ENCODE measurements at regions of chr1 and their contacts with region 1.

Region 1: DNA sequence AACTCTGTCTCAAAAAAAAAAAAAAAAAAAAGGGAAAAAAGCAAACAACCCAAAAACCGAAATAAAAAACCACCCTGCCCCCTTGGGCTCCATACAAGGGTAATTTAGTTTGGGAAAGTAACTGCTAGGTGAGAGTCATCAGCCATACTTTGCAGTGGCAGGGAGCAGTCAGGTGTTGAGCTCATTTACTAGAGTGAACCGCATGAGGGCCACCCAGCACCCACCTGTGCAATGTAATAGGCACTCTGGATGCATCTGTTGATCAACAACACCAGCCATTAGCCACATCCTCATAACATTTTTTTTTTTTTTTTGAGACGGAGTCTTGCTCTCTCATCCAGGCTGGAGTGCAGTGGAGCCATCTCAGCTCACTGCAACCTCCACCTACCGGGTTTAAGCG is 9.1 kb downstream of the INAVA start:
- DNase-seq: peak in 1 of 35 experiments; percentile 34
- ATAC-seq: no peak
- H3K4me3 ChIP-seq: no peak overlapping the region
- H3K4me3 Mint-ChIP-seq: no peak overlapping the region
- H3K27ac ChIP-seq: no peak overlapping the region
- H3K27ac Mint-ChIP-seq: no peak overlapping the region
- H3K4me1 ChIP-seq: peaks cover 3 to 30% of the 10 kb centered on the region in 2 experiments
- H3K4me1 Mint-ChIP-seq: peaks cover 19 to 32% (median 23%) of the 10 kb centered on the region in 3 donors
- H3K27me3 ChIP-seq: peaks cover 0 to 47% of the 10 kb centered on the region in 2 experiments
- H3K27me3 Mint-ChIP-seq: peaks cover 3 to 4% of the 10 kb centered on the region in 2 donors

Region 2: GRCh38 chr1:200877010-200877409 is 26.8 kb before region 1 on chr1:
- CTCF ChIA-PET with region 1: no interaction called
- POLR2A ChIA-PET with region 1: interaction called, 9 to 11 read pairs
- DNase-seq: no peak
- ATAC-seq: no peak
- H3K4me3 ChIP-seq: no peak overlapping the region
- H3K4me3 Mint-ChIP-seq: peak overlapping the region in 1 of 3 donors; percentile 28
- H3K27ac ChIP-seq: no peak overlapping the region
- H3K27ac Mint-ChIP-seq: peak overlapping the region in 1 of 2 donors; percentile 88
- H3K4me1 ChIP-seq: peaks cover 6 to 53% of the 10 kb centered on the region in 2 experiments
- H3K4me1 Mint-ChIP-seq: peaks cover 38 to 67% (median 45%) of the 10 kb centered on the region in 3 donors
- H3K27me3 ChIP-seq: peaks cover under 1 to 28% of the 10 kb centered on the region in 2 experiments
- H3K27me3 Mint-ChIP-seq: peaks cover 24 to 29% of the 10 kb centered on the region in 2 donors